CD4-positive, alpha-beta T cell (primary cell): ENCODE measurements at regions of chr13 and their contacts with region 1.

Region 1: GRCh38 chr13:39616087-39616694 is 13.2 kb upstream of the LHFPL6 start:
- DNase-seq: peak in 9 of 14 experiments; percentile 2 to 74 (median 17)
- ATAC-seq: peak; percentile 78
- H3K4me3 ChIP-seq: no peak overlapping the region
- H3K4me3 Mint-ChIP-seq: no peak overlapping the region
- H3K27ac ChIP-seq: no peak overlapping the region
- H3K27ac Mint-ChIP-seq: no peak overlapping the region
- H3K4me1 ChIP-seq: no peaks in the 10 kb centered on the region
- H3K4me1 Mint-ChIP-seq: no peaks in the 10 kb centered on the region
- H3K27me3 ChIP-seq: peaks cover 0 to 6% of the 10 kb centered on the region in 2 experiments
- H3K27me3 Mint-ChIP-seq: peaks cover 33% of the 10 kb centered on the region
- CTCF ChIP-seq: peak; percentile 85

Region 2: DNA sequence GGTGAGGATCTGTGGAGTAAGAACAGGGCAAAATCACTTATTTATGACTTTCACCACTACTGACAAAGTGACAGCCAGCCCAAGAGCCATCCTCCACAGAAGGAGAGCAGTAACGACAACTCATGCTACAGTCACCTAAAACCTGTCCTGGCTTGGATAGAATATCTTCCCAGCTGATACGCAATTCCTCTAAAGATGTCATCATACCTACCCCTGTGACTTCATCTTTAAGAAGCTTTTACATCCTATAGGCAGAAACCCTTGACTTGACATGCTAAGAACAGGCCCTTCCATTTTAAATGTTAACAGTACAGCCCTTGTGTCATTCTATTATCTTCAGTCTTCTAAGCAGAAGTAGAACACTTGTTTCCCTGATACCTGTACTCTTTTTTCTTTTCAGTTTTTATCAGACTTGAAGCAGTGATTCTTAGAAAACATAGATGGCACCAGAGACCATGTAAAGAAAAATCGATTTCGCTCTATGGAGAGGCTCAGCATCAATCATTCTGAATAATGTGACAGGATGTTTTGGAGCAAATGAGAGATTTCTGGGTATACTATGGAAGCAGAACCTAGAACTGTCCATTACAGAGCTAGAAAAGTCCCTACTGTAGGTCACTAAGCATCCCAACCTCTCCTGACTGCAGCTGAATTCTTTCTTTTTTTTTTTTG is 645.7 kb before region 1 on chr13:
- CTCF ChIA-PET with region 1: no interaction called
- POLR2A ChIA-PET with region 1: no interaction called
- intact Hi-C with region 1: loop called (anchors 5 kb)
- DNase-seq: peak in 3 of 14 experiments; percentile 7 to 10 (median 9)
- ATAC-seq: no peak
- H3K4me3 ChIP-seq: no peak overlapping the region
- H3K4me3 Mint-ChIP-seq: no peak overlapping the region
- H3K27ac ChIP-seq: no peak overlapping the region
- H3K27ac Mint-ChIP-seq: no peak overlapping the region
- H3K4me1 ChIP-seq: no peaks in the 10 kb centered on the region
- H3K4me1 Mint-ChIP-seq: no peaks in the 10 kb centered on the region
- H3K27me3 ChIP-seq: peaks cover 0 to 3% of the 10 kb centered on the region in 2 experiments
- H3K27me3 Mint-ChIP-seq: peaks cover 4% of the 10 kb centered on the region
- CTCF ChIP-seq: no peak

Region 3: DNA sequence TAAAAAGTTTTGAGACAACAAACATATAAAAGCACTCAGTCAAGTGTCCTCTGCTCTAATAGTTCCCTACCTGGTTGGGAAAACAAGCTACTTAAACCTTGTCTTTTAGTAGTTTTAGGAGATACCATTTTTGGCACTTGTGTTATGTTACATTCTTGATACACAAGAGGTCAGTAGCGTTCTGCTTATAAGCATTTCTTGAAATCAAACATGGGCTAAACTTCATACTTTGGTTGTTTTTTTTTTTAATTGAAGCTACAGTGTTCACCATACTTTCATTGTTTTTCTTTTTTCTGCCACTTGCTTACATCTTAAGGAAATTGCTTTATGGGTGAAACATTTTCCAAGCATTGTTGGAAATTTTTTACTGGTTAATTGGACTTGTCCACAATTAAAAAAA is 565.0 kb before region 1 on chr13:
- CTCF ChIA-PET with region 1: interaction called, 5 read pairs
- POLR2A ChIA-PET with region 1: no interaction called
- intact Hi-C with region 1: loop called in 1 of 2 experiments (anchors 2 kb)
- DNase-seq: peak in 3 of 14 experiments; percentile 40 to 53 (median 52)
- ATAC-seq: peak; percentile 48
- H3K4me3 ChIP-seq: no peak overlapping the region
- H3K4me3 Mint-ChIP-seq: no peak overlapping the region
- H3K27ac ChIP-seq: no peak overlapping the region
- H3K27ac Mint-ChIP-seq: no peak overlapping the region
- H3K4me1 ChIP-seq: no peaks in the 10 kb centered on the region
- H3K4me1 Mint-ChIP-seq: no peaks in the 10 kb centered on the region
- H3K27me3 ChIP-seq: no peaks in the 10 kb centered on the region
- H3K27me3 Mint-ChIP-seq: no peaks in the 10 kb centered on the region
- CTCF ChIP-seq: peak; percentile 50